ENCODE measurements at regions of chr11 and their contacts with region 1.

Region 1: DNA sequence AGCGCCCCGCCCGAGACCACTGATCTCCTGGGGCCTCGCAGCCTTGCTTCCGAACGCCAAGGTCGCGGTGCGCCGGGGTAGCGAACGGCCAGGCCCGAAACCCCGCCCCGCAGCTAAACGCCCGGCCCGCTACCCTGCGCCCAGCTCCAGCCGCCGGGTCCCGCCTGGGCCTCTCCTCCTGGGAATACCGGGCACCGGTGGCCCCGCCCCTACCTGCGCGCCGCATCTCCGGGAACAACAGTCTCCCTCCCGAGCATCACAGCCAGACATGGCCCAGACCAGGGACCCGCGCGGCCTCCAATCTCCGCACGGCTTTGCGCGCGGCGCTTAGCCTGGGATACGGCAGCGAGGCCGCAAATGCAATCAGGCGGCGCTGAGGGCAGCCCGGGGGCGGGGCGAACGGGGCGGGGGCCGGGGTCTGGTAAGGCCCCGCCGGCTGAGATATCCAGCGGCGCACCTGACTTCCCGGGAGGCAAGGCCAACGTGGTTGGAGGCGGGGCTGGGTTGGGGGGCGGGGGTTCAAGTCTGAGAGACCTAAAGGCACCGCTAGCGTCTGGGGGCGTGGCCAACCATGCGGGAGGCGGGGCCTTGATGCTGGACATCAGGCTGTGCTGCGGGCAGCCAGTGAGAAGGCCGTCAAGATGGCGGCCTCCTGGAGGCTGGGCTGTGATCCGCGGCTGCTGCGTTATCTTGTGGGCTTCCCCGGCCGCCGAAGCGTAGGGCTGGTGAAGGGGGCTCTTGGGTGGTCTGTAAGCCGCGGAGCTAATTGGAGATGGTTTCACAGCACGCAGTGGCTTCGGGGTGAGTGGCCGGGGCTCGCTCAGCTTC is at the starts of genes APIP and PDHX:
- DNase-seq: peak; percentile 94
- ATAC-seq: peak; percentile 93
- H3K4me3 ChIP-seq: peak within 1 kb of the TSS; percentile 64 to 95 (median 85)
- H3K4me3 Mint-ChIP-seq: peak within 1 kb of the TSS; percentile 99
- H3K27ac ChIP-seq: peak within 1 kb of the TSS; percentile 84 to 85
- H3K27ac Mint-ChIP-seq: peak within 1 kb of the TSS; percentile 97
- H3K4me1 ChIP-seq: peaks cover 10 to 18% of the 10 kb centered on the region in 2 donors
- H3K4me1 Mint-ChIP-seq: peaks cover 33% of the 10 kb centered on the region
- H3K27me3 ChIP-seq: no peaks in the 10 kb centered on the region
- H3K27me3 Mint-ChIP-seq: no peaks in the 10 kb centered on the region
- CTCF ChIP-seq: no peak
- total RNA-seq, gene APIP: 18.5 and 19.4 TPM in 2 replicates
- total RNA-seq, gene PDHX: 25.8 and 35.4 TPM in 2 replicates

Region 2: GRCh38 chr11:34105079-34105956 is 810.9 kb before region 1 on chr11 and contains the start of gene NAT10:
- CTCF ChIA-PET with region 1: no interaction called
- POLR2A ChIA-PET with region 1: interaction called, 4 read pairs
- intact Hi-C with region 1: loop called (anchors 1 kb)
- DNase-seq: peak; percentile 99
- ATAC-seq: peak; percentile 91
- H3K4me3 ChIP-seq: peak within 1 kb of the TSS; percentile 70 to 99 (median 93)
- H3K4me3 Mint-ChIP-seq: peak within 1 kb of the TSS; percentile 97
- H3K27ac ChIP-seq: peak within 1 kb of the TSS; percentile 95 to 96
- H3K27ac Mint-ChIP-seq: peak within 1 kb of the TSS; percentile 100
- H3K4me1 ChIP-seq: peaks cover 24 to 28% of the 10 kb centered on the region in 2 donors
- H3K4me1 Mint-ChIP-seq: peaks cover 47% of the 10 kb centered on the region
- H3K27me3 ChIP-seq: no peaks in the 10 kb centered on the region
- H3K27me3 Mint-ChIP-seq: no peaks in the 10 kb centered on the region
- CTCF ChIP-seq: no peak
- total RNA-seq, gene NAT10: 73.5 and 74.5 TPM in 2 replicates

Region 3: DNA sequence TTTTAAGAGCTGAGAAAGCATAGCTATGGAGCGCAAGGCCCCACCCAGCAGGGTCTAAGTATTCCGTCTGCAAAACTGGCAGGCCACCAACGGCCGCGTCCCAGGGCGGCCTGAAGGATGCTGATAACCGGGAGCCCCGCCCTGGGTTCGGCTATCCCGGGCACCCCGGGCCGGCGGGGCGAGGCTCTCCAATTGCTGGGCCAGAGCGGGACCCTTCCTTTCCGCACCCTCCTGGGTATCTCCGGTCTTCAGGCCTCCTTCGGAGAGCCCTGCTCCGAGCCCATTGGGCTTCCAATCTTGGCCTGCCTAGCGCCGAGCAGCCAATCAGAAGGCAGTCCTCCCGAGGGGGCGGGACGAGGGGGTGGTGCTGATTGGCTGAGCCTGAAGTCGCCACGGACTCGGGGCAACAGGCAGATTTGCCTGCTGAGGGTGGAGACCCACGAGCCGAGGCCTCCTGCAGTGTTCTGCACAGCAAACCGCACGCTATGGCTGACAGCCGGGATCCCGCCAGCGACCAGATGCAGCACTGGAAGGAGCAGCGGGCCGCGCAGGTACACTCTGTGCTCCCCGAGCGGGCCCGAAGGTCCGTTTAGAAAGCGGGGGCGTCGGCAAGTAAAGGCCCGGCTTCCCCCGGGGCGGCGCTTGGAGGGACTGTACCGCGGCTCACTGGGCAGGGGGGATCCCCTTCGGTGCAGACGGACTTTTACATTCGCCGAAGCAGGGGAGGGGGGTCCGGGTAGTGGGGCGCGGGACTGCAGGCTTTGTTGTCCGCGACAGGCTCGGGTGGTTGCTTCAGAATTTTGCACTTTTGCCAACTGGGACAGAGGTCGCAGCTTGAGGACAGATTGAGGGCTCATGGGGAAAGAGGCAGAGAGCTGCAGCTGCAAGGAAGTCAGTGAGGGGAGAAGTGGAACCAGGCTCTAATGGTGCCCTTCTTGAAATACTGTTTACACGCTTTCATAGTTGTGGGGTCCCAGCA is 477.4 kb before region 1 on chr11 and contains the start of gene CAT:
- CTCF ChIA-PET with region 1: no interaction called
- POLR2A ChIA-PET with region 1: no interaction called
- intact Hi-C with region 1: loop called (anchors 1 kb)
- DNase-seq: peak; percentile 96
- ATAC-seq: peak; percentile 92
- H3K4me3 ChIP-seq: peak within 1 kb of the TSS; percentile 82 to 98 (median 88)
- H3K4me3 Mint-ChIP-seq: peak within 1 kb of the TSS; percentile 99
- H3K27ac ChIP-seq: peak within 1 kb of the TSS; percentile 75 to 85
- H3K27ac Mint-ChIP-seq: peak within 1 kb of the TSS; percentile 98
- H3K4me1 ChIP-seq: peaks cover 27 to 39% of the 10 kb centered on the region in 2 donors
- H3K4me1 Mint-ChIP-seq: peaks cover 44% of the 10 kb centered on the region
- H3K27me3 ChIP-seq: no peaks in the 10 kb centered on the region
- H3K27me3 Mint-ChIP-seq: no peaks in the 10 kb centered on the region
- CTCF ChIP-seq: no peak
- total RNA-seq, gene CAT: 83.2 and 88.8 TPM in 2 replicates

Region 4: GRCh38 chr11:34926101-34926830 is 10.0 kb after region 1 on chr11:
- CTCF ChIA-PET with region 1: interaction called, 13 read pairs
- POLR2A ChIA-PET with region 1: no interaction called
- intact Hi-C with region 1: no loop called
- DNase-seq: peak; percentile 70
- ATAC-seq: peak; percentile 57
- H3K4me3 ChIP-seq: no peak overlapping the region
- H3K4me3 Mint-ChIP-seq: no peak overlapping the region
- H3K27ac ChIP-seq: no peak overlapping the region
- H3K27ac Mint-ChIP-seq: no peak overlapping the region
- H3K4me1 ChIP-seq: no peaks in the 10 kb centered on the region
- H3K4me1 Mint-ChIP-seq: peaks cover 15% of the 10 kb centered on the region
- H3K27me3 ChIP-seq: no peaks in the 10 kb centered on the region
- H3K27me3 Mint-ChIP-seq: no peaks in the 10 kb centered on the region
- CTCF ChIP-seq: peak; percentile 88

Region 5: DNA sequence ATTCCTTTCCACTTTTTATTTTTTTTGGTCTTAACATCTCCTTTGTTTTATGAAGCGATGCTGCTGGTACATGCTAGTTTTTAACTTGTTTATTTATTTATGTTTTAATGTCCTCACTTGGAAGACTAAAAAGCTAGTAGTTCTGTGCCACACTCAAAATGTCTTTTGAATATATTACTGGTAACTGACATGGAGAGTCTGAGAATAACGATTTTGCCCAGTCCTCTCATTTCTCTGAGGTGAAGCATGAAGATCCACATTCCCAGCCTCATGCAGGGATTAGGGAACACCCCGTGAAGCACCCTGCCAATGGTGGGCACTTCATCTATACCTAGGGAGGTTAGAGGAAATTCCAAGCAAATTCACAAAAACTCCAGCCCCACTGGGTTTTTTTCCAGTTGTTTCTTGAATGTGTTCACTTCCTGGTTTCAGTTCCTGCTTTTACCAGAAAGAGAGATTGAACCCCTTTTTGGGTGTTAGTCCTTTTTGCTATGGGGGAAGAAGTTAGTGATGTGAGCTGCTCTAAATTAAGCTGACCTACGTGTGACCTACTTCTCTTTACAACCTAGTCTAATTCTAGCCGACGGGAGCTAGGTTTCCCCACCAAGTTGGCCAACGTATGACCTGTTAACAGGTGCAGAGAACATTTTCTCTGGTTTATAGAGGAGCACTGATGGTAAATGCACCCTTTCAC is 397.0 kb after region 1 on chr11:
- CTCF ChIA-PET with region 1: no interaction called
- POLR2A ChIA-PET with region 1: interaction called, 3 read pairs
- intact Hi-C with region 1: loop called (anchors 5 kb)
- DNase-seq: peak; percentile 84
- ATAC-seq: peak; percentile 91
- H3K4me3 ChIP-seq: peak overlapping the region in 2 of 5 experiments; percentile 20 to 42
- H3K4me3 Mint-ChIP-seq: peak overlapping the region; percentile 63
- H3K27ac ChIP-seq: peak overlapping the region; percentile 92 to 93
- H3K27ac Mint-ChIP-seq: peak overlapping the region; percentile 86
- H3K4me1 ChIP-seq: peaks cover 43 to 61% of the 10 kb centered on the region in 2 donors
- H3K4me1 Mint-ChIP-seq: peaks cover 56% of the 10 kb centered on the region
- H3K27me3 ChIP-seq: no peaks in the 10 kb centered on the region
- H3K27me3 Mint-ChIP-seq: no peaks in the 10 kb centered on the region
- CTCF ChIP-seq: no peak

Measured in B cell (primary cell).